ENCODE measurements at regions of chr1 and their contacts with region 1.

Region 1: GRCh38 chr1:239383714-239384113 is 2.7 kb upstream of the CHRM3 start:
- DNase-seq: no peak
- ATAC-seq: no peak
- H3K4me3 ChIP-seq: no peak overlapping the region
- H3K27ac ChIP-seq: no peak overlapping the region
- H3K4me1 ChIP-seq: peaks cover 0 to 21% (median 7%) of the 10 kb centered on the region in 12 donors
- H3K27me3 ChIP-seq: peaks cover 3 to 62% (median 38%) of the 10 kb centered on the region in 9 donors
- CTCF ChIP-seq: no peak
- POLR2A ChIP-seq: no peak

Region 2: GRCh38 chr1:239322369-239322768 is 61.3 kb before region 1 on chr1:
- intact Hi-C with region 1: loop called in 1 of 10 experiments (anchors 2 kb)
- DNase-seq: no peak
- ATAC-seq: no peak
- H3K4me3 ChIP-seq: no peak overlapping the region
- H3K27ac ChIP-seq: no peak overlapping the region
- H3K4me1 ChIP-seq: no peaks in the 10 kb centered on the region
- H3K27me3 ChIP-seq: no peaks in the 10 kb centered on the region
- CTCF ChIP-seq: no peak
- POLR2A ChIP-seq: no peak

Measured in heart left ventricle (tissue), 16 donors.